A549 (cell line): ENCODE measurements at regions of chr9 and their contacts with region 1.

Region 1: GRCh38 chr9:69421908-69422801 is 97.1 kb downstream of the ENTREP1 start:
- DNase-seq: peak; percentile 60 to 62
- ATAC-seq: peak; percentile 77 to 91; a peak in 5 of 6 replicates
- H3K4me3 ChIP-seq: no peak overlapping the region
- H3K27ac ChIP-seq: no peak overlapping the region
- H3K4me1 ChIP-seq: no peaks in the 10 kb centered on the region
- CTCF ChIP-seq: peak; percentile 84
- EP300 ChIP-seq: no peak
- POLR2A ChIP-seq: no peak
- RAD21 ChIP-seq: peak; percentile 93

Region 2: GRCh38 chr9:69391151-69391886 is 30.8 kb before region 1 on chr9:
- CTCF ChIA-PET with region 1: no interaction called
- POLR2A ChIA-PET with region 1: no interaction called
- DNase-seq: no peak
- ATAC-seq: no peak
- H3K4me3 ChIP-seq: no peak overlapping the region
- H3K27ac ChIP-seq: no peak overlapping the region
- H3K4me1 ChIP-seq: no peaks in the 10 kb centered on the region
- CTCF ChIP-seq: no peak
- EP300 ChIP-seq: no peak
- POLR2A ChIP-seq: no peak
- RAD21 ChIP-seq: no peak

Region 3: DNA sequence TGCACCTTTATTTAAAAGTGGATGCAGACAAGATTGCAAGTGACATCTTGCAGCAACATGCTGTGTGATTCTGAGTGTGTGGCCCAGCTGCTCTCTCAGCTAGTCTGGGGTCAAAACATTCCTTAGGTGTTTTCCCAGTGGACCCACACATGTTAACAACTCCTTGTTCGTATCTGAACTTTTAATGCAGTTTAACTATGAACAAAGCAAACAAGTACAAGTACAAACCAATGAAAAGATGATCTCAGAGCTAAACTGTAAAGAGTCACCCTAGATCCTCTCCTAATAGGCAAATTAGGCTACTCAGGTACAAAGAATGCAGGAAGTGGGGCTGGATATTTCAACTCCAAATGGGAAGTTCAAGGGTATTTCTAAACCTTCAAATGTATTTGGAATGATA is 11.2 kb after region 1 on chr9:
- CTCF ChIA-PET with region 1: interaction called, 20 read pairs
- POLR2A ChIA-PET with region 1: no interaction called
- DNase-seq: no peak
- ATAC-seq: no peak
- H3K4me3 ChIP-seq: no peak overlapping the region
- H3K27ac ChIP-seq: no peak overlapping the region
- H3K4me1 ChIP-seq: no peaks in the 10 kb centered on the region
- CTCF ChIP-seq: no peak
- EP300 ChIP-seq: no peak
- POLR2A ChIP-seq: no peak
- RAD21 ChIP-seq: no peak

Region 4: DNA sequence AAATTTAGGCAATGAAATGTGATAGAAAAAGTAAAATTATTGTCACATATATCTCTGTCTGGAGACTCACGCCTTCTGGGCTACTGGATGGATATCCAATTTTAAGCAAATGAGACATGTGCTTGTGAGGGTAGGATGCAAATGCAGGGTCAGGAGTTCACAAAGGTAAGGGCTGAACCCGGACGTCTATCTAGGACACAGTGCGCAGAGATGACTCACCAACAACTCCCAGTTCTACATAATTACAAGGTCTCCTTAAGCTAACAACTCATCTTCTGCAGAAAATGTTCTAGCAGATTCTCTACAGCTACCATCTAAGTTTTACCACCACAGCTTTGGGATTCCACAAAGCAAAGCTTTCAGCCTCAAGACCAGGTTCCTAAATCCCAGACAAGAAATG is 63.3 kb after region 1 on chr9:
- CTCF ChIA-PET with region 1: no interaction called
- POLR2A ChIA-PET with region 1: no interaction called
- DNase-seq: no peak
- ATAC-seq: no peak
- H3K4me3 ChIP-seq: no peak overlapping the region
- H3K27ac ChIP-seq: no peak overlapping the region
- H3K4me1 ChIP-seq: no peaks in the 10 kb centered on the region
- CTCF ChIP-seq: no peak
- EP300 ChIP-seq: no peak
- POLR2A ChIP-seq: no peak
- RAD21 ChIP-seq: no peak

Region 5: GRCh38 chr9:69535911-69536310 is 113.8 kb after region 1 on chr9:
- CTCF ChIA-PET with region 1: interaction called, 11 read pairs
- POLR2A ChIA-PET with region 1: no interaction called
- DNase-seq: no peak
- ATAC-seq: no peak
- H3K4me3 ChIP-seq: no peak overlapping the region
- H3K27ac ChIP-seq: no peak overlapping the region
- H3K4me1 ChIP-seq: no peaks in the 10 kb centered on the region
- CTCF ChIP-seq: no peak
- EP300 ChIP-seq: no peak
- POLR2A ChIP-seq: no peak
- RAD21 ChIP-seq: no peak

Region 6: GRCh38 chr9:69672596-69673310 is 250.6 kb after region 1 on chr9:
- CTCF ChIA-PET with region 1: interaction called, 24 read pairs
- POLR2A ChIA-PET with region 1: no interaction called
- DNase-seq: peak; percentile 73 to 82
- ATAC-seq: peak; percentile 91 to 97
- H3K4me3 ChIP-seq: peak overlapping the region; percentile 73
- H3K27ac ChIP-seq: peak overlapping the region; percentile 53 to 84; a peak in 5 of 6 replicates
- H3K4me1 ChIP-seq: no peaks in the 10 kb centered on the region
- CTCF ChIP-seq: peak; percentile 66
- EP300 ChIP-seq: no peak
- POLR2A ChIP-seq: no peak
- RAD21 ChIP-seq: peak; percentile 62 to 70

Region 7: DNA sequence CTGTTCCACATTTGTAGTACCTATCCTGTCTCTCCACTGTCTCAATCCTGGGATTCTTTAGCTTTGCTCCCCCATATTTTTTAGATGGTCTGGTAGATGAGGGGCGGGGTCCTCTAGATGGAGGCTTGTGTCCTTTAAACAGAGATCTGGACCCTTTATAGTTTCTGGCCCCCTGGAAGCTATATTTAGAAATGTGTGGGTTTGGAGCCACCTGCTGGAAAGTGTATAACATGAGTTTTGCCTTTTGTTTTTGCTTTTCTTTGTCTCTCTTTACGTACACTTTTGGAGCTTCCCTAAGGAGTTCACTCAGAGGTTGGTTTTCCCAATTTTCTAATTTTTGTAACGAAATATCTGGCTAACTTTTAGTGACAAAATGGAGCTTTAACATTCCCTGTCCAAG is 509.2 kb after region 1 on chr9:
- CTCF ChIA-PET with region 1: interaction called, 45 read pairs
- POLR2A ChIA-PET with region 1: no interaction called
- DNase-seq: no peak
- ATAC-seq: peak; percentile 57 to 60; a peak in 2 of 6 replicates
- H3K4me3 ChIP-seq: no peak overlapping the region
- H3K27ac ChIP-seq: no peak overlapping the region
- H3K4me1 ChIP-seq: no peaks in the 10 kb centered on the region
- CTCF ChIP-seq: peak; percentile 64
- EP300 ChIP-seq: no peak
- POLR2A ChIP-seq: no peak
- RAD21 ChIP-seq: peak; percentile 72 to 73

Region 8: GRCh38 chr9:70111042-70111602 is 689.0 kb after region 1 on chr9:
- CTCF ChIA-PET with region 1: interaction called, 16 read pairs
- POLR2A ChIA-PET with region 1: no interaction called
- DNase-seq: peak; percentile 27 to 66
- ATAC-seq: peak in 1 of 2 experiments; percentile 85; a peak in 4 of 6 replicates
- H3K4me3 ChIP-seq: no peak overlapping the region
- H3K27ac ChIP-seq: no peak overlapping the region
- H3K4me1 ChIP-seq: no peaks in the 10 kb centered on the region
- CTCF ChIP-seq: peak; percentile 69
- EP300 ChIP-seq: no peak
- POLR2A ChIP-seq: no peak
- RAD21 ChIP-seq: peak; percentile 47 to 56; a peak in 4 of 5 replicates